ENCODE measurements at regions of chr7 and their contacts with region 1.

Region 1: DNA sequence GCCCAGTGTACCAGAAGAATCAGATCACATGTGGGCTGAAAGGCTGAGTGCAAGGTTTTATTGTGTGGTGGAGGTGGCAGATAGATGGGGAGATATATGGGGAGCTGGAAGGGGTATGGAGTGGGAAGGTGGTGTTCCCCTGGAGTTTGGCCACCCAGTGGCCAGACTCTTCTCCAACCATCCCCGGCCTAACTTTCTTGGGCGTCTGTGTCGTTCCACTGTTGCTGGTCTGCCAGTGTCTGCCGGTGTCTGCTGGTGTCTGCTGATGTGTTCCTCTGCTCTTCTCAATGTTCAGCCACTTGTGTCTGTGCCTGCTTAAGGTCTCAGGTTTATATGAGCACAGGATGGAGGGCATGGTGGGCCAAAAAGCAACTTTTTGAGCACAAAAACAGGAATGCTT is 78.4 kb upstream of the PALS2 start:
- DNase-seq: no peak
- H3K4me3 Mint-ChIP-seq: no peak overlapping the region
- H3K27ac Mint-ChIP-seq: no peak overlapping the region
- H3K4me1 Mint-ChIP-seq: no peaks in the 10 kb centered on the region
- H3K27me3 Mint-ChIP-seq: peaks cover 75% of the 10 kb centered on the region
- CTCF ChIP-seq: no peak

Region 2: DNA sequence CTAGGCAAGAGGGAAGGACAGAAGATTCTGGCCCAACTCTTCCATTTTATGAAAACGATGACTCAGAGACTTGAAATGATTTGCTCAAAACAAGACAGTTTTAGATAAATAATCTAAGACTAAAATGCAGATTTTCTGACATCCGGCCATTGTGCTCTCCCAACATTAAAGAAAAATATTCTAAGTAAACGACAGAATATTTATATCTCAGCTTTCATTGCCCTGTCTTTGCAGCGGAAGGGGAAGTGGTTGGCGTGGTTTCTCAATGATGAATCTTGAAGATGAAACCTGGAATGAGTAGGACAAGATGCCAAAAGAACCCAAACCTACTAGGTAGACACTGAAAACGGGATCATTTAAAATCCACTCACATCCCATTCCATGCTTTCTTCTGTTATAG is 239.7 kb before region 1 on chr7:
- CTCF ChIA-PET with region 1: no interaction called
- intact Hi-C with region 1: no loop called
- DNase-seq: no peak
- H3K4me3 Mint-ChIP-seq: no peak overlapping the region
- H3K27ac Mint-ChIP-seq: no peak overlapping the region
- H3K4me1 Mint-ChIP-seq: no peaks in the 10 kb centered on the region
- H3K27me3 Mint-ChIP-seq: peaks cover 58% of the 10 kb centered on the region
- CTCF ChIP-seq: no peak

Region 3: DNA sequence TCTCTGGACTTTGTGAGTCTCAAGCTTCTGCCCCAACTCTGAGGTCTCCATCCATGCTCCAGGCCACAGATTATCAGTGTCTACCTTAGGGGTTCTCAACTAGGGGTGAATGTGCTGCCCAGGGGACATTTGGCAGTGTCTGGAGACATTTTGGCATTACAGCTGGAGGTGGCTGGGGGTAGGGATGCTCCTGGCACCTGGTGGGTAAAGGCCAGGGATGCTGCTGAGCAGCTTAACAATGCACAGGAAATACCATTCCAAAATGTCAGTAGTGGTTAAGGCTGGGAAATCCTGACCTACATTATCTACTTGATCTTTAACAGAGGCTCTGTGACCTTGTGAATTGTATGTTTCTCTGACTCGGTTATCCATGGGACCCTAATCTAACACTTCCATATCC is 11.1 kb after region 1 on chr7:
- CTCF ChIA-PET with region 1: interaction called, 12 read pairs
- intact Hi-C with region 1: no loop called
- DNase-seq: no peak
- H3K4me3 Mint-ChIP-seq: no peak overlapping the region
- H3K27ac Mint-ChIP-seq: no peak overlapping the region
- H3K4me1 Mint-ChIP-seq: no peaks in the 10 kb centered on the region
- H3K27me3 Mint-ChIP-seq: peaks cover 42% of the 10 kb centered on the region
- CTCF ChIP-seq: no peak